ENCODE measurements at regions of chr15 and their contacts with region 1.

Region 1: DNA sequence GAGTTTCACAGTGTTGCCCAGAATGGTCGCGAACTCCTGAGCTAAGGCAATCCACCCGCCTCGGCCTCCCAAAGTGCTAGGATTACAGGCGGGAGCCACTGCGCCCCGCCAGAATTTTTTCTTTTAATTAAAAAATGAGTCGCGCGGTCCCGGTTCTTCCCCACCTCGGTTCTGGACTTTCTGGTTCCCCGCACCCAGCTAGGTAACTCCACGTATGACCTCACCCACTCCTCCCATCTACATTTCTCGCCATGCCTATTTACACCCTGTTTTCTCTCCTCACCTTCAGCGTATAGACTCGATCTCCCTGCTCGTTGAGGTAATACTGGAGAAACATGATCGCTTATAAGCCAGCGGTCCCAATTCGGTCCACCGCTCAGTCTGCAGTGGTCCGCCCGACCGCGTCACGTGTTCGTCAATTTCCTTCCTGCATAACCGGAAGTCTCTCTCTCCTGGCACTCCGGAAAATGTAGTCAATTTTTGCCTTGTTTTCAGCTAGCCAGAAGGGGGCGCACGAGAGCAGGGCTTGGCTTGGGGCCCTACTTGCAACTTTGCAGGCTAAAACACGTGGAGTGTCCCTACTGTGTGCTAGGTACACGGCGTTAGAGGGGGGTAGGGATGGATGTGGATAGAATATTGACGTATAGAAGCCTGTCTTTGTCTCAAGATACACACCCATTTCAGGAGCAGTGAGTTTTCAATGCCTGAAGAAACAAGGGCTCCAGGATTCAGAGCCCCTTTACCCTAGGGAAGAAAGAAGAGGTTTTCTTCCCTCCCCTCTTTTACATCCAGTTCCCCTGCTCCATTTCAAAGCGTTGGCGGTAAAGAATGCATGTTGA is at the starts of genes NOP10 and NUTM1:
- DNase-seq: peak; percentile 86
- ATAC-seq: peak; percentile 93
- H3K4me3 ChIP-seq: peak within 1 kb of the TSS; percentile 85
- H3K27ac ChIP-seq: peak within 1 kb of the TSS; percentile 75
- H3K4me1 ChIP-seq: peaks cover 8% of the 10 kb centered on the region; the same call in 1 of the 2 replicates
- H3K27me3 ChIP-seq: no peaks in the 10 kb centered on the region
- CTCF ChIP-seq: peak; percentile 96 to 99 (median 97)
- EP300 ChIP-seq: 0 out of 4 replicates have a peak, but pooled peaks have one; percentile 15 to 29
- POLR2A ChIP-seq: peak; percentile 87
- RAD21 ChIP-seq: peak; percentile 91
- polyA plus RNA-seq, gene NOP10: 1,758 to 1,778 TPM
- polyA plus RNA-seq, gene NUTM1: not detected

Region 2: DNA sequence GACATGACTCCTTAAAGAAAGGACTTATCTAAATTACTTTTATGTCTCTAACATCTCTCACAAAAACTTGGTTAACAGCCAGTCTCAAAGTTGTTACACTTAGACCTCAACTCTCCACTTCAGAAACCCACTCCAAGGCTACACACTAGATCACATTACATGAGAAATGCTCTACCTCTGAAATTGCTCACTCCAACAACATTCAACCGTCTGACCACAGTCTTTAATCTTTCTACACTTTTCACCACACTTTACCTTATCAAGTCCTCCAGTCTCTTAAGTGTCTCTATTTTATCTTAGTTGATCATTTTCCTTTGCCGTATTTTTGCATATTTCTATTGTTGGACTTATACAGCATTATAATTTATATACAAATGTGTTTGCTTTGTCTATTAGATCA is 11.1 kb before region 1 on chr15:
- CTCF ChIA-PET with region 1: interaction called, 15 read pairs
- POLR2A ChIA-PET with region 1: interaction called, 37 read pairs
- RAD21 ChIA-PET with region 1: interaction called, 57 read pairs
- SMC1A ChIA-PET with region 1: interaction called, 89 read pairs
- in situ Hi-C with region 1: no loop called
- intact Hi-C with region 1: no loop called
- DNase-seq: no peak
- ATAC-seq: peak; percentile 13; the same call in 2 of the 3 replicates
- H3K4me3 ChIP-seq: peak overlapping the region; percentile 8
- H3K27ac ChIP-seq: peak overlapping the region; percentile 94
- H3K4me1 ChIP-seq: peaks cover 28% of the 10 kb centered on the region
- H3K27me3 ChIP-seq: no peaks in the 10 kb centered on the region
- CTCF ChIP-seq: no peak
- EP300 ChIP-seq: no peak
- POLR2A ChIP-seq: no peak
- RAD21 ChIP-seq: no peak

Measured in GM12878 (cell line).